Heart right ventricle (tissue), 16 donors: ENCODE measurements at regions of chr19 and their contacts with region 1.

Region 1: DNA sequence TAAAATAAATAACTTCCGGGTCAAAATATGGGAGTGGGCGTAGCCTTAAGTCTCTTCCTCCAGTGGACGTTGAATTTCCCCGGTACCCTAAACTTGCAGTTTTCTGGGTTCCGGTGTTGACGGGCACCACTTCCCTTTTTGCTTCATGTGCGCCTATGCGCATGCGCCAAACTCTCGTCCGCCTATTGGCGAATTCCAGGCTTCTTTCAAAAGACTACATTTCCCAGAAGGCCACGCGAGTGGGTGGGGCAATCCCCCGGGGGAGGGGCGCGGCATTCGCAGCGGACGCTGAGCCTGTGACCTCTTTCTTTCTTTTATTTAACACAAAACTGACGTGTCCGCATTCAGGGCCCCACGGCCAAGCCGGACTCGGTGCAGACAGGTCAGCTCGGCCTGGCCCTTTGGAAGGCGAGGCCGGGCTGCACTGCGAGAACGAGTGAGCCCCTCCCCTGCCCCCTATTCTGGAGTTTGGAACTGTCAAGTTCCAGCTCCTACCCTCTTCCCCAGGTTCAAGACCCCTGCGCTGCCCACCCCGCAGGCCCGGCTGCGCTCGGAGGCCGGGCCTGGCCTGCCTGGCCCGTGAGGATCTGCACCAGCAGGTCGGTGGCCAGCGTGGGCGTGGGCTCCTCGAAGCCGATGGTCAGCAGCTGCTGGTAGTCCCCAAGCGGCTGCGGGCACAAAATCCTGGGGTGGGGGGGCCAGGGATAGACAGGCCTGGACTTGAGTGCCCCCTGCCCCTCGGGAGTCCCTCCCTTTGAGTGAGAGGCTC is 4.1 kb downstream of the C19orf67 start:
- DNase-seq: peak; percentile 99 to 100
- ATAC-seq: peak; percentile 89 to 97 (median 96)
- H3K4me3 ChIP-seq: peak overlapping the region; percentile 63 to 93 (median 82)
- H3K27ac ChIP-seq: peak overlapping the region; percentile 88 to 97 (median 94)
- H3K4me1 ChIP-seq: peaks cover 5 to 42% (median 19%) of the 10 kb centered on the region in 9 donors
- H3K27me3 ChIP-seq: no peaks in the 10 kb centered on the region
- CTCF ChIP-seq: no peak

Region 2: DNA sequence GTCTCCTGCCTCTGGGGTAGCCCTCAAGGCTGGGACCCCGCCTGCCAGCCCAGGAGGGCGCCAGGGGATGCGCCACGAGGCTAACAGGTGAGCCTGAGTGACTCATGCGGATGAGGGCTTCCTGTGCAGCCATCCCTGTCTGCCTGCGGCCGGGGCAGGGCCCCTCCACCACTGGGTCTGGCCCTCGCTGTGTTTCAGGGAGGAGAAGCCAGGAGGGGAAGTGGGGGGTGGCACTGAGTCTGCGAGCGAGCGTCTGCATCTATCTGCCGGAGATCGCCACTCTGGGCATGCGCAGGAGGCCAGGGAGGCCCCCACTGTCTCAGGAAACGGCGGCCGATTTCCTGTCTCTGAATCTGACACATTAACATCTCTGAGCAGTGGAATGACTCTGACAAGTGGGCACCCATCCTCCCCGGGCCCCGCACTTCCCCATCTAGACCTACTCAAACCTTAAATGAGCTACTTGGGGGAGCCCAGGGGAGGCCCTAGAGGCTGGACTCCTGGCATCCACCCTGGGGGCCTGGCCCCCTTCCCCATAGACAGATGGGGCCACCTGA is 95.1 kb before region 1 on chr19:
- intact Hi-C with region 1: no loop called
- DNase-seq: peak; percentile 89 to 90
- ATAC-seq: peak; percentile 64 to 88 (median 79)
- H3K4me3 ChIP-seq: peak overlapping the region in 7 of 10 donors; percentile 9 to 40 (median 28)
- H3K27ac ChIP-seq: peak overlapping the region; percentile 47 to 98 (median 92)
- H3K4me1 ChIP-seq: peaks cover 6 to 42% (median 29%) of the 10 kb centered on the region in 9 donors
- H3K27me3 ChIP-seq: no peaks in the 10 kb centered on the region
- CTCF ChIP-seq: peak in 1 of 9 donors; percentile 5

Region 3: GRCh38 chr19:14117668-14118164 is 36.2 kb after region 1 on chr19 and contains the start of gene PRKACA:
- intact Hi-C with region 1: loop called in 8 of 10 experiments (anchors 5 kb)
- DNase-seq: peak; percentile 98 to 99
- ATAC-seq: peak; percentile 85 to 95 (median 90)
- H3K4me3 ChIP-seq: peak within 1 kb of the TSS; percentile 83 to 96 (median 90)
- H3K27ac ChIP-seq: peak within 1 kb of the TSS; percentile 86 to 100 (median 99)
- H3K4me1 ChIP-seq: peaks cover 38 to 66% (median 62%) of the 10 kb centered on the region in 9 donors
- H3K27me3 ChIP-seq: no peaks in the 10 kb centered on the region
- CTCF ChIP-seq: no peak
- total RNA-seq, gene PRKACA: 473 to 691 (median 518) TPM

Region 4: DNA sequence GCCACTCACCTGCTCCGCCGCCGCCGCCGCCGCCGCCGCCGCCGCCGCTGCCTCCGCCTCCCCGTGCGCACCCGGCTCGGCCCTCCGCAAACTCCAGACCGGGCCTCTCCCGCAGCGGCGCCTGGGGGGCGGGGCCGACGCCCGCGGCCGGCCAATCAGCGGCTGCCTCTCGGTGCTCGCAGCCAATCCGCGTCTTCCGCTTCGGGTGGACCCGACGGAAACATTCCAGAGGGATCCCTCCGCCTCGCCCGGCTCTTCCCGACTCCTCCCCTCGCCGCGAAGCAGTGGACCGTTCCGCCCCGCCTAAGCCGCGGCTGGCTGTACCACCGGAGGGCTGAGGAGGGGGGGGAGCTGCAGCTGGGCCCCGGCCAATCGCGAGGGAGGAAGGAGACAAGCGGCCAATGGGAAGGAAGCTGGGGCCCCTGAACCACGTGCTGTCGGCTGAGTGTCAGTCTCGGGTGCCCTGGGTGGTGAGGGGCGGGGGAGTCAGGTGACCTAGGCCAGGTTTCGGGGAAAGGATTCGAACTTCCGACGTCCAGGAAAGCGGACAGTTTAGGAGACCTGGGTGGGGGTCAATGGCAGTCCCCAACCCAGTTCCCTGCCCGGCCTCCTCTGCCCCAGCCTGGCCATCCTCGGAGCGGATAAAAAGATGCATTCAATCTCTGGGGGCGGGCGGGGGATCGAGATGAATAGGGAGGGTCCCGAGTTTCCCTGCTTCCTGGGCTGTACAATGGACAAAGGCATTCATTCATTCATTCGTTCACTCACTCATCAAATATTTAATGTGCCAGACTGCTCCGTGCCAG is 414.7 kb after region 1 on chr19 and contains the start of gene GIPC1:
- intact Hi-C with region 1: no loop called
- DNase-seq: peak; percentile 97
- ATAC-seq: peak; percentile 96 to 99 (median 98)
- H3K4me3 ChIP-seq: peak within 1 kb of the TSS; percentile 72 to 93 (median 82)
- H3K27ac ChIP-seq: peak within 1 kb of the TSS in 9 of 10 donors; percentile 63 to 81 (median 79)
- H3K4me1 ChIP-seq: peaks cover 3 to 36% (median 27%) of the 10 kb centered on the region in 9 donors
- H3K27me3 ChIP-seq: no peaks in the 10 kb centered on the region
- CTCF ChIP-seq: no peak
- total RNA-seq, gene GIPC1: 41.6 to 51.5 (median 45.8) TPM